A673 (cell line): ENCODE measurements at regions of chrX and their contacts with region 1.

Region 1: DNA sequence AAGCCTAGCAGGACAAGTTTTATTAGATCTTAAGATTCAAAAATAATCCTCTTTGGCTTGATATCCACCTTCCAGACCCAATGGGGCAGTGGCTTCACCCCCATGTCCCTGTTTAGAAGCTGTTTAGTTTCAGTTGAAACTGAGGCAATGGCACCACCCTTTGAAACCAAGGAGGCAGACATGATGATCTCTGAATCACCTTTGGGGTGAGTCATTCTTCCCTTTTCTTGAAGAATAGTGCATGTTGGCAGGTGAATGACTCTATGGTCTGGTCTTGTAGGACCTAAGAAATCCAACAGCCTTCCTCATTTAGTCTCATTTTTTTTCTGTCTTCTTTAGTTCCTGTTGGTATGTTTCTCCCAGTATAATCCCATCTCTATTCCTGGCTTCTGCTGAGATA is 29.5 kb upstream of the BMP15 start:
- DNase-seq: no peak
- H3K4me3 ChIP-seq: no peak overlapping the region
- H3K27ac ChIP-seq: no peak overlapping the region
- H3K4me1 ChIP-seq: peaks cover 4% of the 10 kb centered on the region
- H3K27me3 ChIP-seq: no peaks in the 10 kb centered on the region
- CTCF ChIP-seq: no peak

Region 2: DNA sequence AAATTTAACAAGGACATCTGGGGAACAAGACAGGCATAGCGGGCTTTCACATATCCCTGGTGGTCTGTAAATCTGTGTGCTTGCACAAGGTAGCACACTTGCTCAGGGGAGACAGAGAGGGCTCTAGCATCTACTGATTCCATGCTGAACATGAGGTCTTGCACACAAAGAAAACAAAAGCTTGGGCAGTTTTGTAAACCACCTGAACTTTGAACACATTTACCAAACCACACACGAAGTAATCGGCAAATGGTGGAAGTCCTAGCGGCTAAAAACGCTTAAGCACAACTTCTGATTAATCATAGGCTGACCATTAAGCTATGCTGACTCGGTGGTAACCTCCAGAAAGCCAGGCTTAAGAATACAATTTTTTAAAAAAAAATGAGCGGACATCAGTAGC is 733.1 kb before region 1 on chrX:
- CTCF ChIA-PET with region 1: no interaction called
- POLR2A ChIA-PET with region 1: interaction called, 16 read pairs
- intact Hi-C with region 1: no loop called
- DNase-seq: no peak
- H3K4me3 ChIP-seq: no peak overlapping the region
- H3K27ac ChIP-seq: no peak overlapping the region
- H3K4me1 ChIP-seq: no peaks in the 10 kb centered on the region
- H3K27me3 ChIP-seq: no peaks in the 10 kb centered on the region
- CTCF ChIP-seq: no peak